GM12878 (cell line): ENCODE measurements at regions of chr19 and their contacts with region 1.

Region 1: DNA sequence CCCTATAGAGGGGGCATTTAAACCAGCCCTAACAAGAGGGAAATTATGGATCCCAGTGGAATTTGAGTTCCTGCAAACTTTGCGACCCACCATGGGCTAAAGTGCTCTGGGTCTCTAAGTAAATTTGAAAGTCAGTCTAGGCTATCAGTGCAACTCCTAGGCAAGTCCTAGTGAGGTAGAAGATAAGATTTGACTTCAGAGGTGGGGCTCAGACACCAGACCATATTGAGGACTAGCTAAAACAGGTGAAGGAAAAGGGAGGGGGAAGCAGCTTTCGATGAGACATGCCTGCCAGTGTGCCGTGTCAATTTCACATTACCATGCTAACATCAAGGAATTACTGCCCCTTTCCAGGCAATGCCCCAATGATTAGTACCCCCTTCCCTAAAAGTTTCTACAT is 38.4 kb downstream of the CD320 start:
- DNase-seq: no peak
- ATAC-seq: no peak
- H3K4me3 ChIP-seq: peak overlapping the region; percentile 47
- H3K27ac ChIP-seq: peak overlapping the region; percentile 95
- H3K4me1 ChIP-seq: peaks cover 21% of the 10 kb centered on the region
- H3K27me3 ChIP-seq: no peaks in the 10 kb centered on the region
- CTCF ChIP-seq: no peak
- EP300 ChIP-seq: no peak
- POLR2A ChIP-seq: no peak
- RAD21 ChIP-seq: no peak

Region 2: GRCh38 chr19:8307965-8308866 is 38.5 kb after region 1 on chr19 and contains the start of gene CD320:
- CTCF ChIA-PET with region 1: no interaction called
- POLR2A ChIA-PET with region 1: interaction called, 9 read pairs
- RAD21 ChIA-PET with region 1: no interaction called
- SMC1A ChIA-PET with region 1: no interaction called
- in situ Hi-C with region 1: loop called (anchors 5 kb)
- intact Hi-C with region 1: no loop called
- DNase-seq: peak; percentile 63
- ATAC-seq: peak; percentile 94
- H3K4me3 ChIP-seq: peak within 1 kb of the TSS; percentile 91
- H3K27ac ChIP-seq: peak within 1 kb of the TSS; percentile 35
- H3K4me1 ChIP-seq: peaks cover 11% of the 10 kb centered on the region
- H3K27me3 ChIP-seq: no peaks in the 10 kb centered on the region
- CTCF ChIP-seq: no peak
- EP300 ChIP-seq: peak in 1 of 2 experiments; percentile 39; a peak in 1 of 4 replicates
- POLR2A ChIP-seq: peak; percentile 89
- RAD21 ChIP-seq: no peak
- polyA plus RNA-seq, gene CD320: 1.1 to 3.5 TPM

Region 3: GRCh38 chr19:8321060-8321985 is 51.6 kb after region 1 on chr19 and contains the starts of genes NDUFA7 and RPS28:
- CTCF ChIA-PET with region 1: interaction called, 6 read pairs
- POLR2A ChIA-PET with region 1: interaction called, 5 read pairs
- RAD21 ChIA-PET with region 1: no interaction called
- SMC1A ChIA-PET with region 1: interaction called, 6 read pairs
- in situ Hi-C with region 1: no loop called
- intact Hi-C with region 1: loop called (anchors 5 kb)
- DNase-seq: peak; percentile 91
- ATAC-seq: peak; percentile 90
- H3K4me3 ChIP-seq: peak within 1 kb of the TSS; percentile 98
- H3K27ac ChIP-seq: peak within 1 kb of the TSS; percentile 84
- H3K4me1 ChIP-seq: peaks cover 21% of the 10 kb centered on the region
- H3K27me3 ChIP-seq: no peaks in the 10 kb centered on the region
- CTCF ChIP-seq: peak; percentile 32 to 60 (median 34); a peak in 4 of 6 replicates
- EP300 ChIP-seq: no peak
- POLR2A ChIP-seq: peak; percentile 97
- RAD21 ChIP-seq: peak; percentile 53
- polyA plus RNA-seq, gene NDUFA7: 277 to 360 TPM
- polyA plus RNA-seq, gene RPS28: 3,036 to 3,905 TPM

Region 4: DNA sequence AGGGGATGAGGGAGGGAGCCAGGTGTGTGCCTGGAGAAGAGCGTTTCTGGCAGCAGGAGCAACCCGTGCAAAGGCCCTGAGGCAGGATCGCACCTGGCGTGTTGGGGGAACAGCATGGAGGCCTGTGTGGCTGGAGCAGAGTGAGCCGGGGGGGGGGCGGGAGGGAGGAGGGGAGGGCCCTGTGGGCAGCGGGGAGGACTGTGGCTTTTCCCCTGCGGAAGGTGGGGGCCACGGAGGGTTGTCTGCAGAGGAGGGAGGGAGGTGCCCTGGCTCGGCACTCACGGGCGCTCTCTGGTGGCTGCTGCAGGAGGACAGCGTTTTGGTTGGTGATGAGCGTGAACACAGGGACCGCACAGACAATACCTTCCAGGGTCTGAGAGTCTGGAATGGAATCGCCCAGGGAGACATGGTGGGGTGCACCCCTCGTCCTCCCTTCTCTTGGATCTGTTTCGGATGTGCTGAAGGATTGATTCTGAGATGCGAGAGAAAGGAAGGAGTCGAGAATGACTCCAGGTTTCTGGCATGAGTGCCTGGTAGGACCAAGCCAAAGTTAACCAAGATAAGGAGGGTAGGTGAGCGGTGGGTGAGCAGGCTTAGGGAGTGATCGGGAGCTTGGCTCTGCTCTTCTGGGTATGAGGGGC is 127.0 kb after region 1 on chr19:
- CTCF ChIA-PET with region 1: interaction called, 5 read pairs
- POLR2A ChIA-PET with region 1: no interaction called
- RAD21 ChIA-PET with region 1: no interaction called
- SMC1A ChIA-PET with region 1: no interaction called
- in situ Hi-C with region 1: no loop called
- intact Hi-C with region 1: loop called (anchors 5 kb)
- DNase-seq: peak; percentile 55
- ATAC-seq: peak; percentile 98
- H3K4me3 ChIP-seq: no peak overlapping the region
- H3K27ac ChIP-seq: no peak overlapping the region
- H3K4me1 ChIP-seq: peaks cover 8% of the 10 kb centered on the region; the same call in 1 of the 2 replicates
- H3K27me3 ChIP-seq: no peaks in the 10 kb centered on the region
- CTCF ChIP-seq: peak; percentile 66 to 88 (median 88)
- EP300 ChIP-seq: no peak
- POLR2A ChIP-seq: no peak; the same call in 1 of the 2 replicates
- RAD21 ChIP-seq: peak; percentile 59